ENCODE measurements at regions of chr21 and their contacts with region 1.

Region 1: GRCh38 chr21:17819114-17819876 is at the start of gene C21orf91:
- DNase-seq: peak; percentile 94
- H3K4me3 ChIP-seq: peak within 1 kb of the TSS; percentile 89
- H3K27ac ChIP-seq: peak within 1 kb of the TSS; percentile 74
- H3K4me1 ChIP-seq: peaks cover 28% of the 10 kb centered on the region
- CTCF ChIP-seq: no peak
- total RNA-seq, gene C21orf91: 13.8 and 15.8 TPM in 2 replicates

Region 2: GRCh38 chr21:17427831-17428483 is 391.3 kb before region 1 on chr21:
- CTCF ChIA-PET with region 1: no interaction called
- POLR2A ChIA-PET with region 1: interaction called, 3 read pairs
- intact Hi-C with region 1: loop called (anchors 5 kb)
- DNase-seq: peak; percentile 92
- H3K4me3 ChIP-seq: peak overlapping the region; percentile 50
- H3K27ac ChIP-seq: peak overlapping the region; percentile 94
- H3K4me1 ChIP-seq: peaks cover 67% of the 10 kb centered on the region
- CTCF ChIP-seq: no peak

Region 3: DNA sequence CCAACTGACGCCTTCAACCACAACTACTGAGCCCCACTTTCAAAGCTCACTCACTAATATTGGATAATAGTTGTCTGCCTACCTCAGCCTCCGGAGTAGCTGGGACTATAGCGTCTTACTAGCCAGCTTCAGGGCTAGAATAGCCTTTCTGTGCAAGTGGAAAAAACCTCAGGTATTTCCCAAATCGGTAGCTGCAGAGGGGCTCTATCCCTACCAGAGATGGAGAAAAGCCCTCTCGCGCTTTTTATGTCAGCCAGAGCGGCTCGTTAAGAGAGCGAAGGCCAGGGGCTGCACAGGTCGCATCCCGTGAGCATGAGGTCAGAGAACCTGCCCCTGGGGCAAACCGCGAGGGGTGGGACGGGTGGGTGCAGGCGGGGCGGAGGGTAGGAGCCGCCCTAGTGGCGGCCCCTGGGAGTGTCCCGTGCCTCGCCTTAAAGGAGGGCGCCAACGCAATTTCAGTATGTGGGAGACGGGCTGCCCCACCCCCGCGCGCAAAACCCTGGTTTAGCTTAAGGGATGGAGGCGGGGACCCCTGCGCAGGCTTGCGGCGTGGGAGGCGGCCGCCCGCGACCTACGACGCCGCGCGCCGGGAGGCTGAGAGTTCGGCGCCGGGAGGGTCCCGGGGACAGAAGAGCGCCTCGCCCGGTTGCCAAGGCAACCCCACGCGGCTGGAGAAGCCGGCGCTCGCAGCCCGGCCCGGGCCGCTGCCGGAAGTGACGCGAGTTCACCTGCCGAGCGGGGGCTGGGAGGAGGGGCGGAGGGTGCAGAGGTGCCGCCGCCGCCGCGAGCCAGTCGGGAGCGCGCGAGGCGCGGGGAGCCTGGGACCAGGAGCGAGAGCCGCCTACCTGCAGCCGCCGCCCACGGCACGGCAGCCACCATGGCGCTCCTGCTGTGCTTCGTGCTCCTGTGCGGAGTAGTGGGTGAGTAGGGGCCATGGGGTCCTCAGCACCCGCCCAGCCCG is 306.8 kb before region 1 on chr21 and contains the start of gene CXADR:
- CTCF ChIA-PET with region 1: no interaction called
- POLR2A ChIA-PET with region 1: interaction called, 3 read pairs
- intact Hi-C with region 1: loop called (anchors 5 kb)
- DNase-seq: peak; percentile 93
- H3K4me3 ChIP-seq: peak within 1 kb of the TSS; percentile 88
- H3K27ac ChIP-seq: peak within 1 kb of the TSS; percentile 35
- H3K4me1 ChIP-seq: peaks cover 19% of the 10 kb centered on the region
- CTCF ChIP-seq: peak; percentile 68
- total RNA-seq, gene CXADR: 6.3 and 6.7 TPM in 2 replicates

Region 4: GRCh38 chr21:17611414-17612022 is 207.8 kb before region 1 on chr21:
- CTCF ChIA-PET with region 1: no interaction called
- POLR2A ChIA-PET with region 1: interaction called, 7 read pairs
- intact Hi-C with region 1: loop called (anchors 2 kb)
- DNase-seq: peak; percentile 85
- H3K4me3 ChIP-seq: peak overlapping the region; percentile 92
- H3K27ac ChIP-seq: peak overlapping the region; percentile 48
- H3K4me1 ChIP-seq: peaks cover 30% of the 10 kb centered on the region
- CTCF ChIP-seq: no peak

Region 5: DNA sequence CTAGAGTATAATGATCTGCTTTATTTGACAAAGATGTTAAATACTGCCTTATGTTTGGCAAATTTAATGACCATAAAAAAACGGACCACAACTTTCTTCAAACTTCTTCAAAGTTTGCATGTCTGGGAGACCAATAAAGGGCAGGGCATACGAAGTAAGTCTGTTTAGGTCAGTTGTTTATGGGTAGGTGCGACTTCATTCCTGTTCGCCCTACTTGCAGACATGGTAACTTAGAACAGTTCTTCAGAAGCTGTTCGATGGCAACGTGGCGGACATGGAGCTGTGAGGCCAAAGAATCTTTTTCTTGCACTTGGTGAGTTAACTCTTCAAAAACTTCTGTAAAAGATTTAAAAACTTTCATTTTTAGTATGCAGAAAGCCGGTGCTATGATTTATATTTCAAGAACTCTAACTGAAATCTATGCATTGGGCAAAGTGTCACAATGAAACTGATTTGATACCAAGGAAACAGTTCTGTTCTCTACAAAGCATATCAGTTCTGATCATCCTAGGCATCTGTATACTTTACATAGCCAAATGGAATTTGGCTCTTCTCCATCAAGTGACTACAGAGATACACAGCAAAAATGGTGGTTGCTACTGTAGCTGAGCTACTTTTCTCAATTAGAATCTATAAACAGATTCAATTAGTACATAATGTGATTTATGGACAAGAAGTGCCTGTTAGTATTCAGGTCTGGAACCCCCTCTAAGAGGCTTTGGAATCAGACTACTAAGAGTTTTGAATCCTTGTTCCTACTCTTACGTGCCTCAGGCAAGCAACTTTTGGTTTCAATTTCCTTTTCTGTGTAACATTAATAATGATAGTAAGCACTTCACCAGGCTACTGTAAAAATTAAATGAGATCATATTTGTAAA is 25.8 kb before region 1 on chr21:
- CTCF ChIA-PET with region 1: no interaction called
- POLR2A ChIA-PET with region 1: interaction called, 13 read pairs
- intact Hi-C with region 1: no loop called
- DNase-seq: peak; percentile 16
- H3K4me3 ChIP-seq: peak overlapping the region; percentile 38
- H3K27ac ChIP-seq: no peak overlapping the region
- H3K4me1 ChIP-seq: peaks cover 34% of the 10 kb centered on the region
- CTCF ChIP-seq: no peak

Region 6: GRCh38 chr21:17798796-17799195 is 20.5 kb before region 1 on chr21:
- CTCF ChIA-PET with region 1: no interaction called
- POLR2A ChIA-PET with region 1: interaction called, 16 read pairs
- intact Hi-C with region 1: no loop called
- DNase-seq: no peak
- H3K4me3 ChIP-seq: no peak overlapping the region
- H3K27ac ChIP-seq: no peak overlapping the region
- H3K4me1 ChIP-seq: peaks cover 23% of the 10 kb centered on the region
- CTCF ChIP-seq: no peak

Region 7: GRCh38 chr21:17805966-17806365 is 13.3 kb before region 1 on chr21:
- CTCF ChIA-PET with region 1: no interaction called
- POLR2A ChIA-PET with region 1: interaction called, 16 read pairs
- intact Hi-C with region 1: no loop called
- DNase-seq: no peak
- H3K4me3 ChIP-seq: no peak overlapping the region
- H3K27ac ChIP-seq: no peak overlapping the region
- H3K4me1 ChIP-seq: no peaks in the 10 kb centered on the region
- CTCF ChIP-seq: no peak

Measured in OCI-LY7 (cell line).